A549 (cell line): ENCODE measurements at regions of chr11 and their contacts with region 1.

Region 1: GRCh38 chr11:5291207-5291838 is 10.4 kb downstream of the OR51B4 start:
- DNase-seq: peak; percentile 47 to 73
- ATAC-seq: peak; percentile 97 to 99
- H3K4me3 ChIP-seq: no peak overlapping the region
- H3K27ac ChIP-seq: no peak overlapping the region
- H3K4me1 ChIP-seq: no peaks in the 10 kb centered on the region
- CTCF ChIP-seq: peak; percentile 74
- EP300 ChIP-seq: no peak
- POLR2A ChIP-seq: no peak
- RAD21 ChIP-seq: peak; percentile 85 to 92

Region 2: GRCh38 chr11:5204787-5205186 is 86.5 kb before region 1 on chr11:
- CTCF ChIA-PET with region 1: interaction called, 44 read pairs
- POLR2A ChIA-PET with region 1: interaction called, 3 read pairs
- DNase-seq: peak; percentile 64 to 80
- ATAC-seq: peak; percentile 95 to 98
- H3K4me3 ChIP-seq: no peak overlapping the region
- H3K27ac ChIP-seq: no peak overlapping the region
- H3K4me1 ChIP-seq: no peaks in the 10 kb centered on the region
- CTCF ChIP-seq: peak; percentile 79
- EP300 ChIP-seq: no peak
- POLR2A ChIP-seq: no peak
- RAD21 ChIP-seq: peak; percentile 88 to 92

Region 3: DNA sequence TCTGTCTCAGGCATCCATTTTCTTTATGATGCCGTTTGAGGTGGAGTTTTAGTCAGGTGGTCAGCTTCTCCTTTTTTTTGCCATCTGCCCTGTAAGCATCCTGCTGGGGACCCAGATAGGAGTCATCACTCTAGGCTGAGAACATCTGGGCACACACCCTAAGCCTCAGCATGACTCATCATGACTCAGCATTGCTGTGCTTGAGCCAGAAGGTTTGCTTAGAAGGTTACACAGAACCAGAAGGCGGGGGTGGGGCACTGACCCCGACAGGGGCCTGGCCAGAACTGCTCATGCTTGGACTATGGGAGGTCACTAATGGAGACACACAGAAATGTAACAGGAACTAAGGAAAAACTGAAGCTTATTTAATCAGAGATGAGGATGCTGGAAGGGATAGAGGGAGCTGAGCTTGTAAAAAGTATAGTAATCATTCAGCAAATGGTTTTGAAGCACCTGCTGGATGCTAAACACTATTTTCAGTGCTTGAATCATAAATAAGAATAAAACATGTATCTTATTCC is 10.7 kb before region 1 on chr11:
- CTCF ChIA-PET with region 1: interaction called, 13 read pairs
- POLR2A ChIA-PET with region 1: no interaction called
- DNase-seq: peak; percentile 94 to 98
- ATAC-seq: peak; percentile 100
- H3K4me3 ChIP-seq: no peak overlapping the region
- H3K27ac ChIP-seq: peak overlapping the region; percentile 78 to 87
- H3K4me1 ChIP-seq: peaks cover 18% of the 10 kb centered on the region
- CTCF ChIP-seq: no peak
- EP300 ChIP-seq: no peak
- POLR2A ChIP-seq: no peak
- RAD21 ChIP-seq: no peak; a peak in 1 of 5 replicates